Breast epithelium (tissue), 4 donors: ENCODE measurements at regions of chr18 and their contacts with region 1.

Region 1: DNA sequence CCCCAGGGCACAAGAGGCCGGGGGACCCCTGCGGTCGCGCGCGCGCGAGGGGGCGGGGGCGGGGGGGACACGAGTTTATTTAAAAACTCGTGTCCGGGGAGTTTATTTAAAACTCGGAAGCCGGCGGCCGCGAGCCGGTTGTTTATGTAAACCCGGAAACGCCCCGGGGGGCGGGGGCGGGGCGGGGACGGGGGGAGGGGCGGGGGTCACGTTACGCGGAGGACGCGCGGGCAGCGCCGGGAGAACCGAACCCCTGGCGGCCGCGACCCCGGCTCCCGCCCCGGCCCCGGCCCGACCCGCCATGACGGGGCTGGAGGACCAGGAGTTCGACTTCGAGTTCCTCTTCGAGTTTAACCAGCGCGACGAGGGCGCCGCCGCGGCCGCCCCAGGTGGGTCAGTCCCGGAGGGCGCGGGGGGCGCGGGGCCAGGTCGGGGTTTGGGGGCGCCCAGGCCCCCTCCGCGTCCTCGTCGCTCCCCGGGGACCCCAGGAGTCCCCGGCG is 4.4 kb downstream of the NFATC1 start:
- DNase-seq: peak in 1 of 2 donors; percentile 78
- H3K4me3 ChIP-seq: peak overlapping the region; percentile 82 to 86 (median 84)
- H3K27ac ChIP-seq: peak overlapping the region; percentile 81 to 84
- H3K4me1 ChIP-seq: peaks cover 0 to 4% of the 10 kb centered on the region in 2 donors
- H3K27me3 ChIP-seq: no peaks in the 10 kb centered on the region
- CTCF ChIP-seq: no peak
- POLR2A ChIP-seq: no peak

Region 2: GRCh38 chr18:79476918-79477571 is 76.9 kb after region 1 on chr18:
- intact Hi-C with region 1: loop called (anchors 10 kb)
- DNase-seq: peak in 1 of 2 donors; percentile 44
- H3K4me3 ChIP-seq: no peak overlapping the region
- H3K27ac ChIP-seq: peak overlapping the region; percentile 34 to 55
- H3K4me1 ChIP-seq: no peaks in the 10 kb centered on the region
- H3K27me3 ChIP-seq: no peaks in the 10 kb centered on the region
- CTCF ChIP-seq: no peak
- POLR2A ChIP-seq: no peak